CD4-positive, alpha-beta T cell (primary cell): ENCODE measurements at regions of chr2 and their contacts with region 1.

Region 1: DNA sequence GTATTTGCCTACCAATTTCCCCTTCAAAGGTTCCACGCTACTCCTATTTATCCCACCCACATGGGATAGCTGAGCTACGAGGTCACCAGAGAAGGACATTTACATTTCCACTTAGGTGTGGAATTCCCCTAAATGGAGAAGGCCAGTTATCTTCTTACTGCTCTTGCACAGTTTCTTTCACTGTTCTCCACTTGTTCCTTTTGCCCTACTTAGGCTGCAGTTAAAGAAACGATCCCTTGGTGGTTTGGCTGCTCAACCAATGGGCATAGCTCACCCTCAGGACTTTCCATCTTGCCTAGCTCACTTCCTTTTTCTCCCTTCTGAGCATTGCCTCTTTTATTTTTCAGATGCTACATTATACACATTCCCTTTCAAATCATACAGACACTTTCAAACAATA is 11.2 kb upstream of the NABP1 start:
- DNase-seq: peak in 3 of 14 experiments; percentile 34 to 59 (median 53)
- ATAC-seq: no peak
- H3K4me3 ChIP-seq: no peak overlapping the region
- H3K4me3 Mint-ChIP-seq: no peak overlapping the region
- H3K27ac ChIP-seq: no peak overlapping the region
- H3K27ac Mint-ChIP-seq: no peak overlapping the region
- H3K4me1 ChIP-seq: peaks cover 4% of the 10 kb centered on the region
- H3K4me1 Mint-ChIP-seq: peaks cover 6% of the 10 kb centered on the region
- H3K27me3 ChIP-seq: no peaks in the 10 kb centered on the region
- H3K27me3 Mint-ChIP-seq: no peaks in the 10 kb centered on the region
- CTCF ChIP-seq: no peak

Region 2: DNA sequence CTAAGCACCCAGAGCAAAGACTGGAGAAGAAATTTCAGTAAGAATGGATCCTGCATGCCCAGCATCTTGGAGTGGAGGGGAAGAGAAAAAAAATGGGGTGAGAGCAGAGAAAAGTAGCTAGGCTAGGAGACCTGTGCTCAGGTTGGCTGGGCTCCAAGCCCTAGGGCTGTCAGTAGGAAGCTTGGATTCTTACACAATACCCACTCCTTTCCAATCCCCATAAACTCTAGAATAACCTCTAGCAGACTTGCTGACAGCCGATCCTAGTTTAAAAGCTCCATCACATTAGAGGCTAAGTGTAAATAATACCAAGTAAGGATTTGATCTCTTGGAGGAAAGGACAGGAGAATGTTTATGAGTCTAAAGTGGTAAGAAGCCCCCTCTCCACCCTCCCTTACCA is 35.0 kb before region 1 on chr2:
- CTCF ChIA-PET with region 1: no interaction called
- POLR2A ChIA-PET with region 1: no interaction called
- intact Hi-C with region 1: loop called in 1 of 2 experiments (anchors 5 kb)
- DNase-seq: no peak
- ATAC-seq: no peak
- H3K4me3 ChIP-seq: no peak overlapping the region
- H3K4me3 Mint-ChIP-seq: no peak overlapping the region
- H3K27ac ChIP-seq: no peak overlapping the region
- H3K27ac Mint-ChIP-seq: no peak overlapping the region
- H3K4me1 ChIP-seq: peaks cover 14% of the 10 kb centered on the region
- H3K4me1 Mint-ChIP-seq: peaks cover 55% of the 10 kb centered on the region
- H3K27me3 ChIP-seq: no peaks in the 10 kb centered on the region
- H3K27me3 Mint-ChIP-seq: no peaks in the 10 kb centered on the region
- CTCF ChIP-seq: no peak

Region 3: DNA sequence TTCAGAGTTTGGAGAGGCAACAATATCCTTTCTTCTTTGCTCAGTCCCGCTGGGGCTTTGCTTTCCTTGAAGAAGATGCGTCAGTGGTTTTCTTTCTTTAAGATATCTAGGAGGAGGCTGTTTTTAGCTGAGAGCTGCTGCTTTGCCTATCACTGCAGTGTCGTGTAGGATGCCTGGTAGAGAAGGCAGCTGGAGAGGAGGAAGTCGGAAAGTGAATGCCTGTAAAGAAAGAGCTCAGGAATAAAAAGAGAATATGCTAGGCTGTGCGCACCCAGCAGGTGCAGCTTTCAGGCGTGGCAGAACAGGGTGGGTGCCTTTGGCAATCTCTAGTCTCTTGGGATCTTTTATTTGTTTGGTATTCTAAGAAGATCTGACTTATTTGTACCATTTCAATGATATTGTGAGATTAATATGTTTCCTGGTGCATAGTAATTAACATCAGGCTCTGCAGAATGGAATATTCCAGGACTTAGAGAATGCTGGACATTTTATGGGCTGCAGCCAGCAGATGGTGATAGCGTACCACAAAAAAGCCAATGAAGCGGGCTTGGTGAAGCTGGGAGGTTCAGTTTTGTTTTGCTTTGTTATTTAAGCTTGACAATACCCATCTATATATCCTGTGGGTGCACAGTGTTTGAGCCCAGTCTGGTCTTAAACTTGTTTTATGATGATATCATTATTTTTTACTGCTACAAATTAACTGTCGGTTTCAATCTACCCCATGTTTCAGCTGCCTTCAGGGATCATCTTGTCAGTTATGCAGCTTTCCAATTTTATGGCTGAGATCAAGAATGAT is 145.3 kb after region 1 on chr2:
- CTCF ChIA-PET with region 1: no interaction called
- POLR2A ChIA-PET with region 1: no interaction called
- intact Hi-C with region 1: no loop called
- DNase-seq: peak in 7 of 14 experiments; percentile 3 to 41 (median 23)
- ATAC-seq: no peak
- H3K4me3 ChIP-seq: no peak overlapping the region
- H3K4me3 Mint-ChIP-seq: no peak overlapping the region
- H3K27ac ChIP-seq: no peak overlapping the region
- H3K27ac Mint-ChIP-seq: no peak overlapping the region
- H3K4me1 ChIP-seq: no peaks in the 10 kb centered on the region
- H3K4me1 Mint-ChIP-seq: no peaks in the 10 kb centered on the region
- H3K27me3 ChIP-seq: no peaks in the 10 kb centered on the region
- H3K27me3 Mint-ChIP-seq: peaks cover 22% of the 10 kb centered on the region
- CTCF ChIP-seq: no peak

Region 4: GRCh38 chr2:192208848-192209247 is 542.1 kb after region 1 on chr2:
- CTCF ChIA-PET with region 1: no interaction called
- POLR2A ChIA-PET with region 1: no interaction called
- intact Hi-C with region 1: no loop called
- DNase-seq: no peak
- ATAC-seq: no peak
- H3K4me3 ChIP-seq: no peak overlapping the region
- H3K4me3 Mint-ChIP-seq: no peak overlapping the region
- H3K27ac ChIP-seq: no peak overlapping the region
- H3K27ac Mint-ChIP-seq: no peak overlapping the region
- H3K4me1 ChIP-seq: no peaks in the 10 kb centered on the region
- H3K4me1 Mint-ChIP-seq: no peaks in the 10 kb centered on the region
- H3K27me3 ChIP-seq: no peaks in the 10 kb centered on the region
- H3K27me3 Mint-ChIP-seq: peaks cover 19% of the 10 kb centered on the region
- CTCF ChIP-seq: no peak